K562 (cell line): ENCODE measurements at regions of chr11 and their contacts with region 1.

Region 1: GRCh38 chr11:33808228-33808828 is 34.0 kb upstream of the FBXO3 start:
- DNase-seq: peak; percentile 79 to 90 (median 80)
- ATAC-seq: peak; percentile 99
- H3K4me3 ChIP-seq: no peak overlapping the region
- H3K27ac ChIP-seq: no peak overlapping the region
- H3K4me1 ChIP-seq: no peaks in the 10 kb centered on the region
- H3K27me3 ChIP-seq: peaks cover 9% of the 10 kb centered on the region in 2 experiments; a peak in 4 of 5 replicates
- CTCF ChIP-seq: peak; percentile 82 to 92 (median 92)
- EP300 ChIP-seq: no peak
- POLR2A ChIP-seq: no peak
- RAD21 ChIP-seq: peak; percentile 77 to 87

Region 2: DNA sequence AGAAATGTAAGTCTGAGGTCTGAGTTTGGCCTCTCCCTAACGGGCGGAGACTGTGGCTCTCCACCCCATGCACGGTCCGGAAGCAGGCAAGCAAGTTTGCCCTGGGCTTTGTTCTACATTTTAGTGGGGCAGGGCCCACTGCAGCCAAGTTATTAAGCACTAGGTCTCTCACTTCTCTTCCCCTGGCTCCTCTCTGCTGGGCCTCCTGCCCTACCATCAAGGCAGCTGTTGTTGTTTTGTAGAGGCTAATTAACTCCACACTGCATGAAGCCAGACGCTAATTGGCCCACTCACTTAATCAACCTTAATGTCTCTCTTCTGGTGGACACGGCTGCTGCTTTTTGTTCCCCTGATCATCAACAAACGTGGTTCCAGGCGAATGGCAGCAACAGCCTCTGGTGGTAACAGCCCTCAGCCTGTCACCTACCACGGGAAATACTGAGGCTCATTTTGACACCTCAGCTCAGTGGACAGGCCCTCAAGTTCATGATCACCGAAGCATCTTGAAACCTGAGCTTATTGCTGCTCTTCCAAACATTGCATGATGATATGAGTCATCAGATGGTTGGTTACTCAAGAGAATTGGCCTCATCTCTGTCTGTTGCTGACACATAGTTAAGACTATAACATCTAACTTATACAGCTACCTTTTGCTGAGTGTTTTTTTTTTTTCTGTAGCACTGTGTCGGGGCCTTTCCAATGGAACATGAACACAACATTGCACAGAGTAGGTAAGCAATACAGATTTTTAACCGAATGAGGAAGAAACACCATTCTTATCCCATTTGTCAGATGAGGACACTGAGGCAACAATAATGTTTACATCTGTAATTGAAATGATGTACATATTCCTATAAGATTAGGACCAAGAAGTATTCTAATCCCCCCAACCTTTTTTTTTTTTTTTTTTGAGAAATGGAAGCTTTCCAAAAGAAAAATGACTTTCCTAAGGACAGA is 104.4 kb after region 1 on chr11:
- CTCF ChIA-PET with region 1: no interaction called
- POLR2A ChIA-PET with region 1: no interaction called
- in situ Hi-C with region 1: no loop called
- intact Hi-C with region 1: no loop called
- DNase-seq: peak; percentile 72 to 86 (median 76)
- ATAC-seq: peak; percentile 91
- H3K4me3 ChIP-seq: no peak overlapping the region
- H3K27ac ChIP-seq: peak overlapping the region; percentile 88
- H3K4me1 ChIP-seq: peaks cover 6 to 15% of the 10 kb centered on the region in 2 experiments; a peak in 3 of 5 replicates
- H3K27me3 ChIP-seq: no peaks in the 10 kb centered on the region
- CTCF ChIP-seq: 0 out of 6 replicates have a peak, but pooled peaks of 1 of the 3 experiments have one; percentile 3
- EP300 ChIP-seq: peak; percentile 68; the same call in 1 of the 2 replicates
- POLR2A ChIP-seq: peak; percentile 59; the same call in 1 of the 2 replicates
- RAD21 ChIP-seq: 0 out of 4 replicates have a peak, but pooled peaks of 1 of the 2 experiments have one; percentile 2

Region 3: GRCh38 chr11:34492806-34493414 is 684.6 kb after region 1 on chr11:
- CTCF ChIA-PET with region 1: no interaction called
- POLR2A ChIA-PET with region 1: no interaction called
- in situ Hi-C with region 1: loop called (anchors 25 kb)
- intact Hi-C with region 1: no loop called
- DNase-seq: peak; percentile 58 to 82 (median 64)
- ATAC-seq: peak; percentile 84
- H3K4me3 ChIP-seq: no peak overlapping the region
- H3K27ac ChIP-seq: no peak overlapping the region
- H3K4me1 ChIP-seq: peaks cover 0 to 4% of the 10 kb centered on the region in 2 experiments; a peak in 2 of 5 replicates
- H3K27me3 ChIP-seq: peaks cover 7 to 44% of the 10 kb centered on the region in 2 experiments; a peak in 4 of 5 replicates
- CTCF ChIP-seq: peak; percentile 54 to 87 (median 69); a peak in 5 of 6 replicates
- EP300 ChIP-seq: no peak
- POLR2A ChIP-seq: no peak
- RAD21 ChIP-seq: peak; percentile 76 to 88